ENCODE measurements at regions of chr1 and their contacts with region 1.

Region 1: DNA sequence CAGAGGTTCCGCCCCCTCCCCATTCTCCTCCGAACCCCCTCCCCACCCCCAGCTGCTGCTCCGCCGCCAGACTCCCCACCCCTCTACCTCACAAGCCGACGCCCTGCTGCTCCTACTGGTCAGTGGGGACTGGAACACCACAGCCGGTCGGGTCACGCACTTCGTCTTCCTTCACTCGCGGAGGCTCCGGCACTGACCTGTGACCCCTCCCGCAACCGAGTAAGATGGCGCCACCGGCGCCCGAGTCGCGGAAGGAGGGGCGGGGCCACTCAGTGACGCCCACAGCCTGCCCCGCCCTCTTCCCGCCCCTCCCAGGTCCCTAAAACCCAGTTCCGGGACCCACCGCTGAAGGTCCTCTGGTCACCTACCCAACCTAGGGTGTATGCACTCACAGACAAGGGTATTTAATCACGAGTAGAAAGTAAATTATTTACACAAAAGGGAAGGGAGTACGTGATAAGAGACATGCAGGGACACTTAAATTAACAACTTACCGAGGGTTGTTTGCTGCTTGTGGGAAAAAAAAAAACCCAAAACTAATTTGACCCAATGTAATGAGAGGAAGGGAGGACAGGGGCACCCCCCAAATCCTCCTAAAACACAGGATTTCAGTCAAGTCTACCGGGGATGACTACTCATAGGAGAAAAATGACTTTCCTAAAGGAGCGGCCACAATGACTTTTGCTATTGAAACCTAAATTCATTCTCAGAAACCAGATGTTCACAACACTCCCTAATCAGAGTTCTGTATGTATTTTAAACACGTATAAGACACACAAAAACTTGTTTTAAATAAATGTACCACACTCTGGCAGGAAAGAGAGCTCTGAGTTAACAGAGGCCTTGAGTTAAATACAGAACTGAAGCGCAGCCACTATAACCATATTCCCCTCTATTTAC is at the start of gene RIT1:
- DNase-seq: peak; percentile 81
- H3K4me3 ChIP-seq: peak within 1 kb of the TSS; percentile 61 to 85
- H3K27ac ChIP-seq: peak within 1 kb of the TSS; percentile 89 to 93
- H3K4me1 ChIP-seq: no peaks in the 10 kb centered on the region
- H3K27me3 ChIP-seq: no peaks in the 10 kb centered on the region
- CTCF ChIP-seq: peak in 1 of 4 experiments; percentile 51
- POLR2A ChIP-seq: peak; percentile 78
- total RNA-seq, gene RIT1: 20.8 to 21.8 TPM

Region 2: GRCh38 chr1:155669233-155670162 is 241.9 kb before region 1 on chr1:
- intact Hi-C with region 1: no loop called
- DNase-seq: no peak
- H3K4me3 ChIP-seq: no peak overlapping the region
- H3K27ac ChIP-seq: no peak overlapping the region
- H3K4me1 ChIP-seq: no peaks in the 10 kb centered on the region
- H3K27me3 ChIP-seq: no peaks in the 10 kb centered on the region
- CTCF ChIP-seq: no peak
- POLR2A ChIP-seq: no peak

Region 3: GRCh38 chr1:155759966-155760630 is 151.3 kb before region 1 on chr1:
- intact Hi-C with region 1: loop called (anchors 10 kb)
- DNase-seq: no peak
- H3K4me3 ChIP-seq: no peak overlapping the region
- H3K27ac ChIP-seq: no peak overlapping the region
- H3K4me1 ChIP-seq: no peaks in the 10 kb centered on the region
- H3K27me3 ChIP-seq: no peaks in the 10 kb centered on the region
- CTCF ChIP-seq: no peak
- POLR2A ChIP-seq: no peak

Region 4: DNA sequence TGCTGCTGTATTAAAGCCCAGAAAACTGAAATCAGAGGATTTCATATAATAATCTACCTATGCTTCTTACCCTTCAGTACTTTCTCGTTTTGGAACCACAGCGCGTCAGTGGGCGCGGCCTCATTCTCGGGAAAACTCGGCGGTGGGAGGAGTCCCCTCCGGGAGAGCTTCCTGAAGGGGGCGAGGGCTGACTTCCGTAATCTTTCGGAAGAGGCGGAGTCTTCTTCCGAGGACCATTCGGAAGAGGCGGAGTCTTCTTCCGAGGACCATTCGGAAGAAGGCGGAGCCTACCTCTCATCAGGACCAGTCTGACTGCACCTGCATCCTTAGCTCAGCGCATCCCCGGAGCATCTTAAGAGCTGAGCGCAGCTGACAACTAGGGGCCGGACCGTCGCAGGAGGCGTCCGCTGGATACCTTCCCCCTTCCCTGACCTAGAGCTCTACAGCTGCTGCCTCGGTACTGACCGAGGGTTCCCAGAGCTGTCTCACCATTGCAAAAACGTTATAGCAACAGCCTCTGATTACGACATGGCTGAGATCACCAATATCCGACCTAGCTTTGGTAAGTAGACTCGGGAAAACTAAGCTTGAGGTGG is 52.1 kb before region 1 on chr1 and contains the start of gene SYT11:
- intact Hi-C with region 1: loop called (anchors 5 kb)
- DNase-seq: peak; percentile 91
- H3K4me3 ChIP-seq: peak within 1 kb of the TSS; percentile 27 to 31
- H3K27ac ChIP-seq: peak within 1 kb of the TSS; percentile 79 to 85
- H3K4me1 ChIP-seq: no peaks in the 10 kb centered on the region
- H3K27me3 ChIP-seq: no peaks in the 10 kb centered on the region
- CTCF ChIP-seq: peak in 1 of 4 experiments; percentile 33
- POLR2A ChIP-seq: no peak
- total RNA-seq, gene SYT11: 3.6 to 28.0 TPM

Measured in prostate gland (tissue), 2 donors.